ENCODE measurements at regions of chr2 and their contacts with region 1.

Region 1: DNA sequence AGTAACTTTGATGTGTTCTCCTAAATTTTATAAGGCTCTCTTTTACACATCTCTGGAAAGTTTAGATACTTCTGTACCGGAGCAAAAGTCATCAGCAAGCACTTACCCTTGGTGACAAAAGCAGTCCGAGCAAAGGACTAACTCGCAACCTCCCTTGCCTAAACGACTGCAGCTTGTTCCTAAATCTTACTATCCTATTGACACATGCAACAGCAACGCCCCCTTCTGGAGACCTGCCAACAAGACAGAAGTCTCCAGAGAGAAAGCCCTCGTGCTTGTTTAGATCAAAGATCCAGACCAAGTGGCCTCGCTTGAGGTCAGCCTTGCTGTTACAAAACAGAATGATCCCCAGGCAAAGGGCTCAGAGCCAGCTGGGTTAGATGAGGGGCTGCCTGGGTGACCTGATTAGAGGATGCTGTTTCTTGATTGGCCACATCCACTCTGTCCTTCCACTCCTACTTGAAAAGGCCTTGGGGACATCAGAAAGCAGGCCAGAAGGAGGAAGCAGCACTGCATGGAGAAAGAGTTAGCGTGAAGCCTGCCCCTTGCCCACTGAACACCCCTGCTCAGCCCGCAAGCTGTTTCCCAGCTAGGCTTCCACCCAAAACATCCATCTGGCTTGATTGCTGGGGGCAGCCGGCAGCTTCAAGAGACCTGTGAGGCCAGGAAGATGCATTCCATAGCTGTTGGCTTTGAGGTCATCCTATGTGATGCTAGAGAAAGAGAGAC is 94.3 kb downstream of the HNRNPLL start:
- DNase-seq: peak; percentile 94
- H3K4me3 ChIP-seq: no peak overlapping the region
- H3K27ac ChIP-seq: no peak overlapping the region
- H3K4me1 ChIP-seq: peaks cover 12% of the 10 kb centered on the region
- CTCF ChIP-seq: peak; percentile 98

Region 2: GRCh38 chr2:37982147-37982582 is 526.3 kb before region 1 on chr2:
- CTCF ChIA-PET with region 1: no interaction called
- POLR2A ChIA-PET with region 1: no interaction called
- intact Hi-C with region 1: loop called (anchors 10 kb)
- DNase-seq: peak; percentile 70
- H3K4me3 ChIP-seq: no peak overlapping the region
- H3K27ac ChIP-seq: no peak overlapping the region
- H3K4me1 ChIP-seq: no peaks in the 10 kb centered on the region
- CTCF ChIP-seq: peak; percentile 99

Region 3: GRCh38 chr2:38465789-38466127 is 42.7 kb before region 1 on chr2:
- CTCF ChIA-PET with region 1: interaction called, 11 read pairs
- POLR2A ChIA-PET with region 1: interaction called, 3 read pairs
- intact Hi-C with region 1: loop called (anchors 2 kb)
- DNase-seq: peak; percentile 88
- H3K4me3 ChIP-seq: no peak overlapping the region
- H3K27ac ChIP-seq: peak overlapping the region; percentile 13
- H3K4me1 ChIP-seq: peaks cover 24% of the 10 kb centered on the region
- CTCF ChIP-seq: peak; percentile 90